Activated CD8-positive, alpha-beta T cell treated with anti-CD3 and anti-CD28 coated beads for 36 hours (primary cell): ENCODE measurements at regions of chr9 and their contacts with region 1.

Region 1: DNA sequence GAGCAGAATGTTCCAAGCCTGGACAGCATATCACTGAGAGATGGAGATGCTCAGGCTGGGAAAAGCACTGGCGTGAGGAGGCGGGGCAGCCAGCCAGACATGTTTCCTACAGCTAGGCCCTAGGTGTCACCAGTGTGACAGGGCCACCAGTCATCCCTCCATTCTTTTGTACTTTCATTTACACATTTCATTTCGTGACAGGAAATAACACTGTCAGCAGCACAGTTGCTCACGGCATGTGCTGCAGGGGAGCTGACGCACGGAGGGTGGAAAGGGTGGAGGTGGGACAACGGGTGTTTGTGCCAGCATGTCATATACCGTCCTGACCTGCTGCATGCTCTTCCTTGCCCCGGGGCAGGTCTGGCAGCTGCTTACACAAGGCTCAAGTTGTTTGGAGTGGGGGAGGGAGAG is 14.8 kb upstream of the CEMIP2 start:
- DNase-seq: peak; percentile 94
- ATAC-seq: peak; percentile 91
- H3K4me3 Mint-ChIP-seq: peak overlapping the region; percentile 58
- H3K27ac Mint-ChIP-seq: peak overlapping the region; percentile 97
- H3K4me1 Mint-ChIP-seq: peaks cover 51% of the 10 kb centered on the region
- H3K27me3 Mint-ChIP-seq: no peaks in the 10 kb centered on the region
- CTCF ChIP-seq: no peak

Region 2: DNA sequence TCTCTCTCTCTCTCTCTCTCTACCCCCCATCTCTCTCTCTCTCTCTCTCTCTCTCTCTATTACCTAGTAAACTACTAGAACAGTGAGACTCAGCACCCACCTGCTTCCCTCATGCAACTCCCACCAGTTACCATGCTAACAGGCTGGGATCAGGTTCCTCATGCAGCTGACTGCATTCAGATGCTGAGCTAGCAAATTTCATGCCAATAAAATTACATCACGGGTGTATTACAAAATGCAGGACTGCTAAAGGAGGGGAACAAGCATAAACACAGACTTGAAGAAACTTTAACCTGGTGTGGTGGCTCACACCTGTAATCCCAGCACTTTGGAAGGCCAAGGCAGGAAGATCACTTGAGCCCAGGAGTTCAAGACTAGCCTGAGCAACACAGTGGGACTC is 90.8 kb before region 1 on chr9:
- CTCF ChIA-PET with region 1: no interaction called
- POLR2A ChIA-PET with region 1: no interaction called
- intact Hi-C with region 1: no loop called
- DNase-seq: no peak
- ATAC-seq: no peak
- H3K4me3 Mint-ChIP-seq: no peak overlapping the region
- H3K27ac Mint-ChIP-seq: no peak overlapping the region
- H3K4me1 Mint-ChIP-seq: peaks cover 16% of the 10 kb centered on the region
- H3K27me3 Mint-ChIP-seq: no peaks in the 10 kb centered on the region
- CTCF ChIP-seq: no peak

Region 3: GRCh38 chr9:71741711-71742648 is 41.1 kb before region 1 on chr9:
- CTCF ChIA-PET with region 1: no interaction called
- POLR2A ChIA-PET with region 1: no interaction called
- intact Hi-C with region 1: no loop called
- DNase-seq: no peak
- ATAC-seq: no peak
- H3K4me3 Mint-ChIP-seq: no peak overlapping the region
- H3K27ac Mint-ChIP-seq: no peak overlapping the region
- H3K4me1 Mint-ChIP-seq: peaks cover 7% of the 10 kb centered on the region
- H3K27me3 Mint-ChIP-seq: no peaks in the 10 kb centered on the region
- CTCF ChIP-seq: no peak

Region 4: DNA sequence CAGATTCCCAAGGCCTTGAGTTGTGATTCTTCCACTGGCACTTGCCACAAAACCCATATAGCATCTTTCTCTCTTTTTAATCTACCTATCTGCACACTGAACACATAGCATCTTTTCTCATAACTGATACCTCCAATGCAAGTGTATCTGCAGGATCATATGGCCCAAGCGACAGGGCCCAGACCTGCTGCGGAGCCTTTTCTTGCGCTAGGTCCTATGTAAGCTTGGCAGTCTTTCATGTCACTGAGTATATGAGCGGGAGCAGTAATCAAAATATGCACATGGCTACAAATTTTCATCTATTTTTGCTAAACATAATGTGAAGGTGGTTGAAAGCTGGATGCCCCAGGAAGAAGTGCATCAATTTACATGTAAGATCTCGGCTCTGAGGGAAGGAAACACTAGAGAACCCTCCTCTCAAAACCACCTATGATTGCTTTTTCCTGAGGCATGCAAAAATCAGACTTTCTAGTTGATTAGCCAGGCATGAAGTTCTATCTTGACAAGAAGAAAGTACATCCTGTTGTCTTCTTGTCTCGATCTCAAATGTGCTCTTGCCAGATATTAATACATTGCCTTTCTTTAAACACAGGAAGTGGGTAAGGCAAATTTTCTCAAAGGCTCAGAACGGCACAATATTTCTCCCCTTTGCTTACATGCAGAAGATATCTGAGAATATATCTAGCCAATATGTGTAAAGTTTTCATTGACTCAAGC is 12.1 kb after region 1 on chr9:
- CTCF ChIA-PET with region 1: interaction called, 50 read pairs
- POLR2A ChIA-PET with region 1: interaction called, 11 read pairs
- intact Hi-C with region 1: no loop called
- DNase-seq: no peak
- ATAC-seq: peak; percentile 76
- H3K4me3 Mint-ChIP-seq: peak overlapping the region; percentile 27
- H3K27ac Mint-ChIP-seq: peak overlapping the region; percentile 88
- H3K4me1 Mint-ChIP-seq: peaks cover 63% of the 10 kb centered on the region
- H3K27me3 Mint-ChIP-seq: no peaks in the 10 kb centered on the region
- CTCF ChIP-seq: no peak

Region 5: GRCh38 chr9:71826289-71826688 is 43.2 kb after region 1 on chr9:
- CTCF ChIA-PET with region 1: no interaction called
- POLR2A ChIA-PET with region 1: no interaction called
- intact Hi-C with region 1: no loop called
- DNase-seq: no peak
- ATAC-seq: no peak
- H3K4me3 Mint-ChIP-seq: no peak overlapping the region
- H3K27ac Mint-ChIP-seq: no peak overlapping the region
- H3K4me1 Mint-ChIP-seq: no peaks in the 10 kb centered on the region
- H3K27me3 Mint-ChIP-seq: no peaks in the 10 kb centered on the region
- CTCF ChIP-seq: no peak